Colonic mucosa (tissue), 4 donors: ENCODE measurements at regions of chr3 and their contacts with region 1.

Region 1: GRCh38 chr3:58013973-58014649 is 5.9 kb downstream of the FLNB start:
- DNase-seq: no peak
- H3K4me3 ChIP-seq: no peak overlapping the region
- H3K27ac ChIP-seq: peak overlapping the region; percentile 17
- H3K4me1 ChIP-seq: peaks cover 31% of the 10 kb centered on the region
- H3K27me3 ChIP-seq: no peaks in the 10 kb centered on the region
- CTCF ChIP-seq: no peak

Region 2: GRCh38 chr3:58059349-58060321 is 45.5 kb after region 1 on chr3:
- intact Hi-C with region 1: loop called (anchors 5 kb)
- DNase-seq: peak; percentile 68
- H3K4me3 ChIP-seq: no peak overlapping the region
- H3K27ac ChIP-seq: peak overlapping the region; percentile 65
- H3K4me1 ChIP-seq: peaks cover 5% of the 10 kb centered on the region
- H3K27me3 ChIP-seq: no peaks in the 10 kb centered on the region
- CTCF ChIP-seq: no peak

Region 3: DNA sequence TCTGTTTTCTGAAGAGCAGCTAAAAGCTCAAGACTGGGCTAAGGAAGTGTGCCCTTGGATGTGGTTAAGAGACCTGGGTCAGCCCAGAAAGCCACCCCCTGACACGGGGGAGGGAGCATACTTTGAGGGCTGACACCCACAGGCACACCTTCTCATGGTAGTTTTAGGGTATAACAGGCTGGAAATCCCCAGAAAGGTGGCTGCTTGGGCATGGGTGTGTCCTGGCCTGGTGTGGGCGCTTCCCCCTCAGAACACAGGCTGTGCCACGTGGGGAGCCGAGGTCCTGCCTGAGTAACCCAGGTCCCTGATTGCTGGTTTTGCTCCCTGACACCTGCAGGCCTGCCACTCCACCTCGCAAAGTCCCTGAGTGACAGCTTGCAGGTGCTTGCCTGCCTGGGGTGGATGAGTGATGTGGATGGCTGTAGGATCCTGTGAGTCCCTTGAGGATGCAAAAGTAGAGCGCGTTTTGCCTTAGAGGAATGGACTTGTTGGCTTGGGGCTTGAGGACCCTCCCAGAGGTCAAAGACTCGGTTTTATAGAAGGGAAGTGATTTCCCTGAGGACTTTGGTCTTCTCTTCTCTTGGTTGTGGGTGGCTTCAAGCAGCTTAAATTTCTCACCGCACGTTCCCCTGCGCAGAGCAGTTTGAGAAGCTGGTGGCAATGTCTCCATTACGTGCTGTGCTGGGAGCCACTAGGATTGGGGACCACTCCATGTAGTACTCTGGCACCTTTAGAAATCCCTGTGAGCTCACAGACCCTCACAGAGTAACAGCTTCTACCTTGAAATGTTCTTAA is 102.2 kb after region 1 on chr3:
- intact Hi-C with region 1: loop called (anchors 10 kb)
- DNase-seq: no peak
- H3K4me3 ChIP-seq: no peak overlapping the region
- H3K27ac ChIP-seq: no peak overlapping the region
- H3K4me1 ChIP-seq: peaks cover 4% of the 10 kb centered on the region
- H3K27me3 ChIP-seq: no peaks in the 10 kb centered on the region
- CTCF ChIP-seq: no peak

Region 4: DNA sequence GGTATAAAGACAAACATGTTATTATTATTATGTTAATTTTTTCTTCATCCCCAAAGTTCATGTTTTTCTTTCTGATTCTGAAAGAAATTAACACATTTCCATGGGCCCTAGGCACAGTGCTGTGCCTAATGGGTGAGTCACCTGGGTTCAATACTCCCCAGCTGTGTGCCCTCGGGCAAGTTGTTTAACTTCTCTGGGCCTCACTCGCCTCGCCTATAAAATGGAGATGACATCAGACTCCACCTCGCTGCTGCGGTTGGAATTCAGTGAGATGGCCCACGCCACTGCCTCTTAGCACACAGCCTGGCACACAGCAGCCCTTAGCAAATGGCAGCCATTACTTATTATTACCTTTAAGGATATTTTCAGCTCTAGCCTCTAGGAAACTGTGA is 174.1 kb after region 1 on chr3:
- intact Hi-C with region 1: no loop called
- DNase-seq: no peak
- H3K4me3 ChIP-seq: no peak overlapping the region
- H3K27ac ChIP-seq: no peak overlapping the region
- H3K4me1 ChIP-seq: no peaks in the 10 kb centered on the region
- H3K27me3 ChIP-seq: no peaks in the 10 kb centered on the region
- CTCF ChIP-seq: no peak